ENCODE measurements at regions of chr4 and their contacts with region 1.

Region 1: GRCh38 chr4:134201216-134202098 is at the start of gene PABPC4L:
- DNase-seq: peak; percentile 18 to 63 (median 35)
- H3K4me3 ChIP-seq: peak within 1 kb of the TSS in 2 of 4 donors; percentile 15 to 55
- H3K27ac ChIP-seq: peak within 1 kb of the TSS in 2 of 5 donors; percentile 51 to 67
- H3K4me1 ChIP-seq: peaks cover 0 to 4% of the 10 kb centered on the region in 2 donors
- H3K27me3 ChIP-seq: peaks cover 3% of the 10 kb centered on the region
- CTCF ChIP-seq: no peak
- POLR2A ChIP-seq: no peak
- total RNA-seq, gene PABPC4L: 0.30 to 2.9 (median 0.60) TPM

Region 2: GRCh38 chr4:134147941-134148340 is 53.5 kb before region 1 on chr4:
- intact Hi-C with region 1: loop called in 1 of 2 experiments (anchors 2 kb)
- DNase-seq: no peak
- H3K4me3 ChIP-seq: no peak overlapping the region
- H3K27ac ChIP-seq: no peak overlapping the region
- H3K4me1 ChIP-seq: no peaks in the 10 kb centered on the region
- H3K27me3 ChIP-seq: no peaks in the 10 kb centered on the region
- CTCF ChIP-seq: no peak
- POLR2A ChIP-seq: no peak

Region 3: DNA sequence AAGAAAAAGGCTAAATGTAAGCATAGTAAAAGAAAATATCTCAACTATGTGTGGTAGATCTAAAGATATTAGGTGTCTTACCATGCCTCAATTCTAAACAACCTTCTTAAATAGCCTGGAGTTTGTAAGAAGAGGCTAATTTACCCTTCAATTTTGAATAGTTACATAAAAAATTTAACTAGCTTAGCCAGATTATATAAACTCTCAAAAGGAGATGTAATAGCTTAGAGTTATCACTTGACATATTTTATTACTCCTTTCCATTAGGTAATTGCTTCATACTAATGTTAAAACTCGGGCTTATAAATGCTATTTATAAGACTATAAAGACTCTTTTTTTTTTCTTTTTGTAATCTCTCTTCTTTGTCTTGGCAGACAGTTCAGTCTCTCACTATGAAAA is 297.6 kb after region 1 on chr4:
- intact Hi-C with region 1: no loop called
- DNase-seq: no peak
- H3K4me3 ChIP-seq: no peak overlapping the region
- H3K27ac ChIP-seq: no peak overlapping the region
- H3K4me1 ChIP-seq: no peaks in the 10 kb centered on the region
- H3K27me3 ChIP-seq: no peaks in the 10 kb centered on the region
- CTCF ChIP-seq: no peak
- POLR2A ChIP-seq: no peak

Region 4: GRCh38 chr4:134531013-134531412 is 329.6 kb after region 1 on chr4:
- intact Hi-C with region 1: no loop called
- DNase-seq: no peak
- H3K4me3 ChIP-seq: no peak overlapping the region
- H3K27ac ChIP-seq: no peak overlapping the region
- H3K4me1 ChIP-seq: no peaks in the 10 kb centered on the region
- H3K27me3 ChIP-seq: no peaks in the 10 kb centered on the region
- CTCF ChIP-seq: no peak
- POLR2A ChIP-seq: no peak

Region 5: DNA sequence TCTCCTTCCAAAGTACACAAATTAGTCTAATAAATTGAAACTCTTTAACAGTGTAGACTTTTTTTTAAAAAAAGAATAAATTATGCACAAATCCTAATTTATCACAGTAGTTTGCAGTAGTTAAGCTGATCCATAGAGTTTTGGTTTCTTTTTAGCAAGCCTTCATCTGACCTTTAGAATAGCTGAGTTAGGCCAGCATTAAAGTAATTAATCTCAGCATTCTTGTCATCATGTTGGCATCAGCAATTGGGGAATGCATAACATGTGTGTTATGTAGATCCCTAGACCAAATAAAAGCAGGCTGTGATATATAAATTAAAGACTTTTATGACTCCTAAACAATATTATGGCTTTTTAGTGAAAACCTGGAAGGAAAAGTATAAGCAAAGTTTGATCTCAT is 426.6 kb after region 1 on chr4:
- intact Hi-C with region 1: no loop called
- DNase-seq: no peak
- H3K4me3 ChIP-seq: no peak overlapping the region
- H3K27ac ChIP-seq: no peak overlapping the region
- H3K4me1 ChIP-seq: peaks cover 0 to 5% of the 10 kb centered on the region in 2 donors
- H3K27me3 ChIP-seq: no peaks in the 10 kb centered on the region
- CTCF ChIP-seq: no peak
- POLR2A ChIP-seq: no peak